GM12878 (cell line): ENCODE measurements at regions of chr1 and their contacts with region 1.

Region 1: GRCh38 chr1:31617917-31618660 is 600 bp downstream of the HCRTR1 start:
- DNase-seq: no peak
- ATAC-seq: peak; percentile 91
- H3K4me3 ChIP-seq: no peak overlapping the region
- H3K27ac ChIP-seq: no peak overlapping the region
- H3K4me1 ChIP-seq: no peaks in the 10 kb centered on the region; the same call in 1 of the 2 replicates
- H3K27me3 ChIP-seq: no peaks in the 10 kb centered on the region; a peak in 2 of 4 replicates
- CTCF ChIP-seq: peak; percentile 71 to 93 (median 71)
- EP300 ChIP-seq: no peak
- POLR2A ChIP-seq: no peak
- RAD21 ChIP-seq: peak; percentile 64

Region 2: DNA sequence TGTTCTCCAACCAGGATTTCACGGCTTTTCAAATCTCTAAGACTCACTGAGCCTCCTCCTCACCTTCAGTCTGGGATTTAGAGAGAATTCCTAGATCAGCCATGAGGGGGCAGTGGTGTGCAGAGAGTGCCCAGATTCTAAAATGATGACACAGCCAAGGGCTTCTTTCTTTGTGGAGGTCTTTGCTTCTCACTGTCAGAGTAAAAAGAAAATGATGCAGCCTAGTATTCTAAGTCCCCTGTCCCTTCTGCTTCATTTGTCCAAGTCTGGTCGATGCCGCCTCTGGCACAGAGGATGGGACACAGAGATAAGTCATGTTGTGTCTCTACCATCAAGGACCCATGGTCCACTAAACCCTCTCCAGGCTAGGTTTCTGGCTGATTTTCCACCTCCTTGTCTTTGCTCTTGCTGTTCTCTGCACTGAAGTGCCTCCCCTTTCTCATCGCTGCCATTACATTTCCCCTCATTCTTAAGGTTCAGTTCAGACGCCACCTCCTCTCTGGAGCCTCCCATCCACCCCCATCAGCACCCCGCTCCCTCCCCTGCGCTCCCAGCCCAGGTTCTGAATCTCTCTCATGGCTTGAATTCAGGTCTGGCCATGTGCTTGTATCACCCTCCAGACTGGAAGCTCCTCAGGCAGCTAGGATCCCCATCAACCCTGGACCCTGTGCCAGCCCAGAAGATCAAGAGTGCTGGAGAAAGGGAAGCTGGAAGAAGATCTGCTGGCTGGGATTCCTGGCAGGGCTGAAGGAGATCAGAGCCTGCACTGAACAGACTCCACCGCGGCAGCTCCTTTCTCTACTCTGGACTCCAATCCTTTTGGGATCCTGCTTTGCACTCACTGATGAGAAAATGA is 53.7 kb before region 1 on chr1:
- CTCF ChIA-PET with region 1: interaction called, 61 read pairs
- POLR2A ChIA-PET with region 1: no interaction called
- RAD21 ChIA-PET with region 1: interaction called, 9 read pairs
- SMC1A ChIA-PET with region 1: interaction called, 12 read pairs
- in situ Hi-C with region 1: no loop called
- intact Hi-C with region 1: loop called (anchors 1 kb)
- DNase-seq: no peak
- ATAC-seq: peak; percentile 91
- H3K4me3 ChIP-seq: no peak overlapping the region
- H3K27ac ChIP-seq: no peak overlapping the region
- H3K4me1 ChIP-seq: no peaks in the 10 kb centered on the region
- H3K27me3 ChIP-seq: no peaks in the 10 kb centered on the region
- CTCF ChIP-seq: peak; percentile 82 to 86 (median 83)
- EP300 ChIP-seq: no peak
- POLR2A ChIP-seq: no peak
- RAD21 ChIP-seq: peak; percentile 95

Region 3: GRCh38 chr1:31593770-31594632 is 24.1 kb before region 1 on chr1:
- CTCF ChIA-PET with region 1: interaction called, 21 read pairs
- POLR2A ChIA-PET with region 1: interaction called, 7 read pairs
- RAD21 ChIA-PET with region 1: interaction called, 6 read pairs
- SMC1A ChIA-PET with region 1: interaction called, 8 read pairs
- in situ Hi-C with region 1: no loop called
- intact Hi-C with region 1: loop called (anchors 2 kb)
- DNase-seq: peak; percentile 26
- ATAC-seq: peak; percentile 100
- H3K4me3 ChIP-seq: no peak overlapping the region
- H3K27ac ChIP-seq: no peak overlapping the region
- H3K4me1 ChIP-seq: no peaks in the 10 kb centered on the region; the same call in 1 of the 2 replicates
- H3K27me3 ChIP-seq: no peaks in the 10 kb centered on the region
- CTCF ChIP-seq: peak; percentile 90 to 97 (median 97)
- EP300 ChIP-seq: no peak
- POLR2A ChIP-seq: no peak
- RAD21 ChIP-seq: peak; percentile 67

Region 4: DNA sequence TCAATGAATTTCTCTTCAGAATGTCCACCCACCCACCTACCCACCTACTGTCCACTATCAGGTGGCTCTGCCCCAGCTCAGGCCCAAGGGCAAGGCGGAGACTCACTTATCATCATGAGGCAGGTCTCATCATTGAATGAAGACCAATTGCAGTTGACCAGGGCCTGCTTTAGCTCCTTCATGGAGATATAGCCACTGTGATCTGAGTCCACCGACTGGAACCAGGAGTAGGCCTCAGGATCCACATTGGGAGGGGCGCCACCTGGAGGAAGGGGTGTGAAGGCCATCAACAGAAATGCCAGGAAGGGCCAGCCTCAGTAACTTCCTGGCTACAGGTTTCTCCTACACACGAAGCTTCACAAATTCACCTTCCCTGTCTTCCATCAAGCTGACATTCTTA is 15.0 kb after region 1 on chr1:
- CTCF ChIA-PET with region 1: interaction called, 47 read pairs
- POLR2A ChIA-PET with region 1: no interaction called
- RAD21 ChIA-PET with region 1: no interaction called
- SMC1A ChIA-PET with region 1: interaction called, 16 read pairs
- in situ Hi-C with region 1: no loop called
- intact Hi-C with region 1: no loop called
- DNase-seq: no peak
- ATAC-seq: peak; percentile 46; the same call in 2 of the 3 replicates
- H3K4me3 ChIP-seq: no peak overlapping the region
- H3K27ac ChIP-seq: no peak overlapping the region
- H3K4me1 ChIP-seq: no peaks in the 10 kb centered on the region
- H3K27me3 ChIP-seq: no peaks in the 10 kb centered on the region
- CTCF ChIP-seq: peak; percentile 36 to 48 (median 43)
- EP300 ChIP-seq: no peak
- POLR2A ChIP-seq: no peak
- RAD21 ChIP-seq: no peak

Region 5: DNA sequence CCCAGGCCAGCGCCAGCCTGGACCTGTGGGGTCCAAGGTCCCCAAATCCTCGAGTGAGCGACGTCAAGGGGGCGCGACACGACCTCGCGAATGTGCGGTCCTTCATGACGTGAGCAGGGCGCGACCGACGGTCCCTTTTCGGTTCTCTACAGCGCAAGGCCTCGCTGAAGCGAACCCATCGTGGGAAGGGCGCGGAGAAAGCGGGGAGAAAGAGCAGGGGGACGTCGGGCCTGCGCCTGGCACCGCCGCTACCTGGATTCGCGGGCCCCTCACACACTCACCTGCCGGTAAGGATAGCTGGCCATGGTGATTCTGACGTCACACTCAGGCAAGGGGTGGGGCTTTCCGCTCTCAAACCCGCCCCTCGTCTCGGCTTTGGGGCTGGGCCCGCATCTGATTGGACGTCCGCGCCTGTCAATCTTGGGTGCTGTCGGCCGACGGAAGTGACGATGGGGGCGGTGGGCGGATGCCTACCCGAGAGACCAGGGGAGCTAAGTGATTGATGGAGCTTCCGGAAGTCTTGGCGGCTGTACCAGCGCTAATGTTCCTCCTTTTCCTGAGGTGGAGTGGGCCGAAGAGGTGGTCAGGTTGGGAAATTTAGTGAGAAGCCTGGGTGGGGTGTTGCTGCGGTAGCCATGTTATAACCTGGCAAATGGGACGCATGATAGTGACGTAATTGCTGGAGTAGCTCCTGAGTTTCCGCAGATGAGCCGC is 26.6 kb after region 1 on chr1 and contains the start of gene PEF1:
- CTCF ChIA-PET with region 1: interaction called, 12 read pairs
- POLR2A ChIA-PET with region 1: interaction called, 3 read pairs
- RAD21 ChIA-PET with region 1: interaction called, 6 read pairs
- SMC1A ChIA-PET with region 1: interaction called, 6 read pairs
- in situ Hi-C with region 1: no loop called
- intact Hi-C with region 1: no loop called
- DNase-seq: peak; percentile 90
- ATAC-seq: peak; percentile 85
- H3K4me3 ChIP-seq: peak within 1 kb of the TSS; percentile 78
- H3K27ac ChIP-seq: peak within 1 kb of the TSS; percentile 92
- H3K4me1 ChIP-seq: peaks cover 5% of the 10 kb centered on the region
- H3K27me3 ChIP-seq: no peaks in the 10 kb centered on the region
- CTCF ChIP-seq: no peak
- EP300 ChIP-seq: no peak
- POLR2A ChIP-seq: peak; percentile 90
- RAD21 ChIP-seq: no peak
- polyA plus RNA-seq, gene PEF1: 27.1 to 40.4 TPM